AG04450 (cell line): ENCODE measurements at regions of chr12 and their contacts with region 1.

Region 1: GRCh38 chr12:52023182-52023975 is 16.6 kb downstream of the TAMALIN start:
- DNase-seq: no peak
- H3K4me3 ChIP-seq: peak overlapping the region; percentile 67
- H3K27ac ChIP-seq: peak overlapping the region; percentile 11
- H3K27me3 ChIP-seq: no peaks in the 10 kb centered on the region
- CTCF ChIP-seq: peak; percentile 89

Region 2: DNA sequence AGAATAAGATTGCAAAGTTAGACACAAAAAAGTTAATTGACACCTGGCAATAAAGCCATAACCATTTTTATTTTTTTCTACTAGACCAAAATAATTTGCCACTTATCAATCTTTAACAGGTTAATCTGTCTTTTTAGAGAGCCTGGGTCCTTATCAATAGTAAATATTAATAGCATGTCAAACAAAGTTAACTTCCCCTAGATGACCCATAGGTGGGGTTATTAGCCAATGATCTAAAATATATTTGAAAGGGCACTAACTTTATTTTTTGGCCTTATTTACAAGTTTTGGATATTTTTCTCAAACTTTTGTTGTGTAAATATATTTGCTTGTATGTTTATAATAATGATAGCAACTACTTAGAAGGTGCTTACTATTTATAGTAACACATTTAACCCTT is 131.5 kb before region 1 on chr12:
- CTCF ChIA-PET with region 1: interaction called, 14 read pairs
- POLR2A ChIA-PET with region 1: no interaction called
- DNase-seq: no peak
- H3K4me3 ChIP-seq: no peak overlapping the region
- H3K27ac ChIP-seq: no peak overlapping the region
- H3K27me3 ChIP-seq: no peaks in the 10 kb centered on the region
- CTCF ChIP-seq: peak; percentile 52

Region 3: DNA sequence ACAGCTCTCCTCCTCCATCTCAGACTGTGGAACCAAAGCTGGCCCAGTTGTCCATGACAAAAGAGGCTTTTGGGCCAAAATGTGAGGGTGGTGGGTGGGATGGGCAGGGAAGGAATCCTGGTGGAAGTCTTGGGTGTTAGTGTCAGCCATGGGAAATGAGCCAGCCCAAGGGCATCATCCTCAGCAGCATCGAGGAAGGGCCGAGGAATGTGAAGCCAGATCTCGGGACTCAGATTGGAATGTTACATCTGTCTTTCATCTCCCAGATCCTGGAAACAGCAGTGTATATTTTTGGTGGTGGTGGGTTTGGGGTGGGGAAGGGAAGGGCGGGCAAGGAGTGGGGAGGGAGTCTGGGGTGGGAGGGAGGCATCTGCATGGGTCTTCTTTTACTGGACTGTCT is 28.4 kb before region 1 on chr12:
- CTCF ChIA-PET with region 1: interaction called, 111 read pairs
- POLR2A ChIA-PET with region 1: interaction called, 5 read pairs
- DNase-seq: no peak
- H3K4me3 ChIP-seq: no peak overlapping the region
- H3K27ac ChIP-seq: peak overlapping the region; percentile 31
- H3K27me3 ChIP-seq: no peaks in the 10 kb centered on the region
- CTCF ChIP-seq: no peak

Region 4: GRCh38 chr12:52050761-52051541 is 27.6 kb after region 1 on chr12 and contains the start of gene NR4A1:
- CTCF ChIA-PET with region 1: interaction called, 24 read pairs
- POLR2A ChIA-PET with region 1: interaction called, 11 read pairs
- DNase-seq: peak; percentile 88
- H3K4me3 ChIP-seq: peak within 1 kb of the TSS; percentile 79
- H3K27ac ChIP-seq: peak within 1 kb of the TSS; percentile 98
- H3K27me3 ChIP-seq: no peaks in the 10 kb centered on the region
- CTCF ChIP-seq: no peak
- polyA plus RNA-seq, gene NR4A1: 4.4 and 6.9 TPM in 2 replicates

Region 5: DNA sequence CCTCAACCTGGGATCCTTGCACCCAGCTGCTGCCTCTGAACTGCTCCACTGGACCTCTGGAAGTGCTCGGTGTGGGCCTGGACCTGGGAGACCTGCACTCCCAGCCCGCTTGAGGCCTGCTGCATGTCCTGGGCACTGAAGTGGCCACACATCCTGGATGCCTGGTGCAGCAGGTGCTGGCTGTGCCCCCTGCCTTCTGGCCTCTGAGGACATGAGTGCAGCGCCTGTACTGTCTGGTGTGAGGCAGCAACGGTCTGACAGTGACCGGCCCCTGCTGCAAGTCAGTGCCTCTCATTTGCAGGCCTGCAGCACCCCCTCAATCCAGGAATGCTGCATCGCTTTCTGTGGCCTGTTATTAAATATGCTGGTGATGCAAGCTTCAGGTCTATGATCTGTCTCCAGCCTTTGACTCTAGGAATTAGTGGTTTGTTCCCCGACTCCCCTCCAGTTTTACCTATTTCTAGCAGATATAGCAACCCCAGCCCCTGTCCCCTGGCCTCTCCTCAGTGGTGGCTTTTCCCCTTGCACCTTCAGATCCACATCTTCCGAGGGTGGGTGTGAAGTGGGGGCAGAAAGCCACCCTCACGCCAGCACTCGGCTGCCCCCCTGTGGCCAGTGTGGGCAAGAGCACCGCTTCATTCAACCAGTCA is 59.7 kb after region 1 on chr12:
- CTCF ChIA-PET with region 1: interaction called, 624 read pairs
- POLR2A ChIA-PET with region 1: interaction called, 20 read pairs
- DNase-seq: no peak
- H3K4me3 ChIP-seq: no peak overlapping the region
- H3K27ac ChIP-seq: peak overlapping the region; percentile 85
- H3K27me3 ChIP-seq: peaks cover 5% of the 10 kb centered on the region
- CTCF ChIP-seq: peak; percentile 99

Region 6: DNA sequence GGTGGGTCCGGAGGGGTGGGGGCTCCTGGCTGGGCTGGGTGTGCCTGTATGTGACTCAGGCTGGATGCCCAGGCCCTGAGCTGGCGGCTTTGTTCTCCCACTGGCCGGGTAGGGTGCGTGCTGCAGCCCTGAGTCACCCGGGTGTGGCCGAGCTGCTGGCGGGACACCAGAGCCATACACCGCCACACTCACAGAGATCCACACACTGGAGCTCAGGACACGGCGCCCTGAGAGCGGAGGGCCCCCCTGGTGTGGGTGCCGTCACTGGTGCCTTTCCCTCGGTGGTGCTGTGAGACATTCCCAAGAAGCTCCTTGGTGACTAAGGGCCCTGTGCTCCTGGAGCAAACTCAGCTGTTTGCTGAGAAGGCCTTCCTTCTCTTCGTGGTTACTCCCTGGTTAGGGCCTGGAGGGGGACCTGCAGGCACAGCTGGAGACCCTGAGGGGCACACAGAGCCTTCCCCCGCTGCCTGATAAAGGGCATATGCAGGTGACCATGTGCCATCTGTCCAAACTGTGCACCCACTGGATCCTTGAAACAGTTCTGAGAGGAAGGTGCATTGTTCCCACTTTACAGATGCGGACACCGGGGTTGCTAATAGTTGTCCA is 124.1 kb after region 1 on chr12:
- CTCF ChIA-PET with region 1: interaction called, 22 read pairs
- POLR2A ChIA-PET with region 1: interaction called, 3 read pairs
- DNase-seq: peak; percentile 96
- H3K4me3 ChIP-seq: no peak overlapping the region
- H3K27ac ChIP-seq: peak overlapping the region; percentile 98
- H3K27me3 ChIP-seq: no peaks in the 10 kb centered on the region
- CTCF ChIP-seq: no peak